Mucosa of descending colon (tissue), 3 donors: ENCODE measurements at regions of chr14 and their contacts with region 1.

Region 1: GRCh38 chr14:23727566-23728335 is 91.6 kb downstream of the DHRS2 start:
- DNase-seq: peak in 1 of 3 donors; percentile 14
- ATAC-seq: peak; percentile 88
- H3K4me3 ChIP-seq: no peak overlapping the region
- H3K4me1 ChIP-seq: no peaks in the 10 kb centered on the region
- CTCF ChIP-seq: no peak

Region 2: DNA sequence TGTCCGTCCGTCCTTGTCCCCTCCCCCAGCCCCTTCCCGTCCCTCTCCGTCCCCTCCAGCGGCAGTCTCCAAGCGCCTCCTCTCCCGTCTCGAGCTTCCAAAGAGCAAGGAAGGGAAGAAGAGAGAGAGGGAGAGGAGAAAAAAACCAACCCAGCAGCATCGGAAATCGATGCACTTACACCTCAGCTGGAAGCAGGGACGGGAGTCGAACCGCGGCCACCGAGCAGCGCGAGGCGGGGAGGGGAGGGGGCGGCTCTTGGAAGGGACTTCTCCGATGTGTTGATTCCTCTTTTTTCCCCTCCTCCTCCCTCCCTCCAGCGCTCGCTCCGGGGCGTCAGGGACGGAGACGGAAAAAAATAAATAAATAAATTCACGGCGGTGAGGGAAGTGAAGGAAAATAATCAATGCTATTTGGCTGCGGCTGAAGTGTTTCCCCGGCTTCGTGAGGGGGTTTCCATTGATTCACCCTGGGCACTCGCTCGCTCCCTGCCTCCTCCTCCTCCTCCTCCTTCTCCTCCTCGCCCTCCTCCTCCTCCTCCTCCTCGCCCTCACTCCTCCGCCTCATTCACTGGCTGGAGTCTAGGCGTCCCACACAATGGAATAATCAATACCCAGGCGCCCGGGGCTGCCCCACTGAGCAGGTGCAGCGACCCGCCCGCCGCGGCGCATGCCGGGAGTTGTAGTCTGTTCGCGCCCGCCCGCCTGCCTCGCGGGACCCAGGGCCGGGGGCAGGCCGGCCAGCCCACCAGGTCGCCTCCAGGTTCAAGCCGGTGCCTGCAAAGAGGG is 176.4 kb before region 1 on chr14 and contains the start of gene ZFHX2:
- intact Hi-C with region 1: no loop called
- DNase-seq: peak; percentile 86 to 91 (median 89)
- ATAC-seq: peak; percentile 77
- H3K4me3 ChIP-seq: peak within 1 kb of the TSS; percentile 13
- H3K4me1 ChIP-seq: peaks cover 9% of the 10 kb centered on the region
- CTCF ChIP-seq: no peak
- total RNA-seq, gene ZFHX2: 0.92 to 3.2 (median 1.6) TPM

Region 3: GRCh38 chr14:23910101-23910875 is 182.5 kb after region 1 on chr14:
- intact Hi-C with region 1: loop called in 1 of 2 experiments (anchors 5 kb)
- DNase-seq: peak in 2 of 3 donors; percentile 73 to 77
- ATAC-seq: peak; percentile 88
- H3K4me3 ChIP-seq: no peak overlapping the region
- H3K4me1 ChIP-seq: no peaks in the 10 kb centered on the region
- CTCF ChIP-seq: peak; percentile 55